Activated CD4-positive, alpha-beta memory T cell treated with anti-CD3 and anti-CD28 coated beads for 36 hours (primary cell): ENCODE measurements at regions of chr13 and their contacts with region 1.

Region 1: DNA sequence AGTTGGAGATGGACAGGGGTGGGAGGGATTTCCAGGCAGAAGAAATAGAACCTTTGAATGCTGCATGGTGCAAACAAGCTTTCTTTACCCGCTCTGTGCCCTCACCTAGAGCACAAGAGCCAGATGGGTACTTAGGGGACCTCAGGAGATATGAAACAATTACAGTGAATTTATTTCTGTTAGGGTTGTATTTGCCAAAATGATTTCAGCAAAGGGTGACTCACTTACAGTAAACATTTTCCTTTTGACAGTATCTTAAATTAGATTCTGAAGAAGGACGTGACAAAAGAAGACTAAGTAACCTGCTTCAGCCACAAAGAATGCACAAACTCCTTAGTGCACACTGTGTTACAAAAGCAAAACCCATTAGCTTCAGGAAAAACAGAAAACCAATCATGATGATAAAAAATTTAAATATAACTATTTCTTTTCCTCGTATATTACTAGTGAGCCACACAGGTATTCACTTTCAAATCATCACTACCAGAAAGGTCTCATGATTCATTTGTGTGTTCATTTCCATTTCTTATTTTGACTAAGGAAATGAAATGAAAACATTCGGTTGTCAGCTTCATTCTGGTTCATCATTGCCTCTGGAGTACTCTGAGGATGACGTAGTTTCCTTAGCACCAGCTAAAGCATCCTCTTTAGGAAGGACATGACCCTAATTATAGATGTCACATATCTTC is 158.8 kb downstream of the NHLRC3 start:
- DNase-seq: peak; percentile 16
- H3K4me3 Mint-ChIP-seq: peak overlapping the region; percentile 7
- H3K27ac Mint-ChIP-seq: peak overlapping the region; percentile 66
- H3K4me1 Mint-ChIP-seq: peaks cover 16% of the 10 kb centered on the region
- H3K27me3 Mint-ChIP-seq: peaks cover 6% of the 10 kb centered on the region

Region 2: DNA sequence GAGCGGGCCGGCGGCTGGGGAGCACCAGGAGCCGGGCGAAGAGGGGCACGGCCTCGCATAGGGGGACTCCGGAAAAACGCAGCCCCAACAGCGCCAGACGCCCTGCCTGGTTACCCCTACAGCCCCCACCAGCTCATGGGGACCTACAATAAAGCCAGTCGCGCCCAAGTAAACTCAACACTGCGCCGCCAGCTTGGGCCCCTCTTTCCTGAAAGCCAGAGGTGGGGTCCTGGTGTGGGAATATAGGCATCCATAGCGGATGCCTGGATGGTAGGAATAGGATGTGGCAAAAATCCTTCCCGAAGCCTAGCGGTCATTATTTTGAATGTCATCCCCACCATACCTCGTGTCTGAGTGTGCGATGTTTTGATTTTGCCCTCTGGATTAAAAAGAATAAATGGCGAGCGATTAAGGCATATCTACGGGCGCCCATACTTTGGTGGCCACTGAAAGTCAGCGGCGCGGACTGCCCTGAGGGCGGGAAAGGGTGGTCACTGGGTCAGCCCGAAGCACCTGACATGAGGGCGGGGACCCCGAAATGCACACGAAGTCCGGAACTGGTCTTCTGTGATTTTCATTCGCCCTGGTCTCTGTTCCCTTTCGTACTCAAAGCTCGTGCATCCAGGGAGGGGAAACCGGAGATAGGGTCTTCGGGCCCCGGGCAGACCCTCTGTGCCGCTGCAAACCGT is 159.1 kb before region 1 on chr13 and contains the starts of genes NHLRC3 and PROSER1:
- CTCF ChIA-PET with region 1: no interaction called
- POLR2A ChIA-PET with region 1: interaction called, 3 read pairs
- intact Hi-C with region 1: loop called (anchors 1 kb)
- DNase-seq: peak; percentile 87
- H3K4me3 Mint-ChIP-seq: peak within 1 kb of the TSS; percentile 89
- H3K27ac Mint-ChIP-seq: peak within 1 kb of the TSS; percentile 95
- H3K4me1 Mint-ChIP-seq: peaks cover 36% of the 10 kb centered on the region
- H3K27me3 Mint-ChIP-seq: no peaks in the 10 kb centered on the region
- total RNA-seq, gene NHLRC3: 15.2 to 16.8 TPM
- total RNA-seq, gene PROSER1: 59.9 to 70.5 TPM

Region 3: DNA sequence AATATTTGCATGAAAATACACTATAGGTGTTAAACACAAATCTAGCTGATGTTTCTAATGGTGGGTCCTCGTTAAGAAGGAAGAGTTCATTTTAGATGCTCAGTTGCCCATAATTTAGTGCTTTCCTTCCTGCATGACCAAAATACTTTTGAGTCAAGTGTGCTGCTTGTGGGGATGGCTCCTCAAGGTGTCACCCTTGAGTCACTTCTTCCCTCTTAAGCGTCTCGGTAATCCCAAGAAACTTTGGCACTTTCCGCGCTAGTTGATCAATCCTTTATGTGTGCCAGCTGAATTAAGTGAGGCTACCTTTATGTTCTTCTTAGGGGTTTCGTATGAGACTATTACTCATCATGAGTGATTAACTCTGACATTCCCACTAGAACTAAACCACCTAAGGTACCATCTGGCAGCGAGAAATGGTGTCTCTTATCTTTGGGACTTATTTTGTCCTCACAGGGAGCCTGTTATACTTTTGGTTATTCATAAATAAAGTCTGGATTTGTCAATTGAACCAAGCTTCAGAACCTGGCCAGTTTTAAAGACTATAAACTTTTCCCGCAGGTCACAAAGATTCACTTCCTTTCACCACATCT is 52.1 kb before region 1 on chr13:
- CTCF ChIA-PET with region 1: interaction called, 3 read pairs
- POLR2A ChIA-PET with region 1: interaction called, 6 read pairs
- intact Hi-C with region 1: loop called (anchors 1 kb)
- DNase-seq: peak; percentile 59
- H3K4me3 Mint-ChIP-seq: no peak overlapping the region
- H3K27ac Mint-ChIP-seq: no peak overlapping the region
- H3K4me1 Mint-ChIP-seq: peaks cover 43% of the 10 kb centered on the region
- H3K27me3 Mint-ChIP-seq: peaks cover 19% of the 10 kb centered on the region

Region 4: DNA sequence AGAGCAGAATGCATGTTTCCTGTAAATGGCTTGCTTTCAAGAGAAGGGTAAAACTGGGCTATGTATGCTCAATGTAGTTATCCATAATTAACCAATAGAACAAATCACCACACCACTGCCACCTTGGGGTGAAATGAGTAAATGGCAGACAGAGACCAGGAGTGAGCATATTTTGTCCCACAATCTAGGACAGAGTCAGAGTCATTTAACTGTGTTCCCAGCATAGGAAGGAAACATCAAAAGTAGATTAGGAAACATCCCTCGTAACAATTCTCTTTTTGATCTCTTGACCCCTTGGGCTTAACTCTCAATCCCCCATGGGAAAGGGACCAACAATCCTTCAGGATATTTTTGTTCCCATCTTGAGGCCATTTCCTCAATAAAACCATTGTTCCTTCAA is 65.9 kb after region 1 on chr13:
- CTCF ChIA-PET with region 1: no interaction called
- POLR2A ChIA-PET with region 1: no interaction called
- intact Hi-C with region 1: loop called (anchors 1 kb)
- DNase-seq: peak; percentile 63
- H3K4me3 Mint-ChIP-seq: no peak overlapping the region
- H3K27ac Mint-ChIP-seq: no peak overlapping the region
- H3K4me1 Mint-ChIP-seq: peaks cover 19% of the 10 kb centered on the region
- H3K27me3 Mint-ChIP-seq: no peaks in the 10 kb centered on the region

Region 5: DNA sequence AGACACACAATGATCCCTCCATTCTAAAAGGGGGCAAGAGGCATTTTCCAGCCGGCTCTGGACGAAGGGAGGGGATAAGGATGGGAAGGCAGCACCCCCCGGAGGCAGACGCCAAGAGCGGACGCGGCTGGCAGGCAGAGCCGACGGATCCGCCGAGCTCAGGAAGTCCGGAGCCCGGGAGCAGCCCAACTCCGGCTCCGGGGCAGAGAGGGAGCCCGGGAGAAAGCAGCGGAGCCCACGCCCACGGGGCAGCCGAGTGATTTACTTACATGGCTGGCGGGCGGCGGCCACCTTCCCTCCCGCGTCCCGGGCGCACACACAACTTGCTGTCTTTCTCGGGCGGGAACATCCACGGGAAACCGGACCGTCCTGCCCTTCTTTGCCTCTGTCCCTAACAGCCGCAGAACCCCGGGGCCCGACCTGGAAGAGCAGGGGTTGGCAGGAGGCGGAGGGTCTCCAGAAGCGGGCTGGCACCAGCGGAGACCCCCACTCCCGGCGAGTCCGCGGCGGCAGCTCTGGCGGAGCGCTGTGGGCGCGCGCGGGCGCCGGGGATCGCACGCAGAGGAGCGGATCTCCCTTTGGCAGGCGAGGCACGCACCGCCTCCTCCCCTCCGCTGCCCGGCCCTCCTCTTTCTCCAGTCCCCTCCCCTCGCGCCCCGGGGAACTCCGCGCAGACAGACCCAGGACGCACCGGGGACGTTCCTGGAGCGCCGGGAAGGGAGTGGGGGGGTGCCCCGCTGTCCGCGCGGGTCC is 405.7 kb after region 1 on chr13 and contains the start of gene LHFPL6:
- CTCF ChIA-PET with region 1: no interaction called
- POLR2A ChIA-PET with region 1: no interaction called
- intact Hi-C with region 1: loop called (anchors 5 kb)
- DNase-seq: peak; percentile 83
- H3K4me3 Mint-ChIP-seq: peak within 1 kb of the TSS; percentile 76
- H3K27ac Mint-ChIP-seq: no peak within 1 kb of the TSS
- H3K4me1 Mint-ChIP-seq: peaks cover 14% of the 10 kb centered on the region
- H3K27me3 Mint-ChIP-seq: peaks cover 35% of the 10 kb centered on the region
- total RNA-seq, gene LHFPL6: 2.7 to 3.0 TPM